IMR-90 (cell line): ENCODE measurements at regions of chr1 and their contacts with region 1.

Region 1: DNA sequence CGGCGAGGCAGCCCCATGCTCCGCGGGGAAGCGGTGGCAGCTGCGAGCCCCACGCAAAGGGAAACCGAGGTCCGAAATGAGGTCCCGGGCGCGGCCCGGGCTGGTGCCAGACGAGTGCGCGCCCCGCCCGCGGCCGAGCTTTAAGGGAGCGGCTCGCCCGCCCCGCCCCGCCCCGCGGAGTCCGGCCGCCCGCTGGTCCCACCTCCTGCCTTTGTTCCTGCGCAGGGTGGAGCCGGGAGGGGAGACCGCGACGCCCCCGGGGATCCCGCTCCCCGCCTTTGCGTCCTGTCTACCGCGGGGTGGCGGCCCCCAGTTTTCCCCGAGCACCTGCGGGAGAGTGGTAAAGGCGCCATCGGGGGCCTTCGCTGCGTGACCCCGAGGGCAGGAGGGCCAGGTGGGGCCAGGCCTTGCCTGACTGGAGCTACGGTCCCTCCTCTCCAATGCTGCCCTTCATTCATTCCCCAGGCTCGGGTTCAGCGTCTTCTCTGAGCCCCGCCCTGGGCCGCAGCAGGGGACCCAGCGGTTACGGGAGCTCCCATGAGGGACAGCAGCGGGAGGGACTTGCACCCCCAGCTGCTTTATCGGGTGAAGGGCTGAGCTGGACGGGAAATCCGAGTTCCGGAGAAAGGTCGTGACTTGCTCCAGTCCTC is at the start of gene HES2:
- DNase-seq: no peak
- ATAC-seq: no peak; the same call in 1 of the 2 replicates
- H3K4me3 ChIP-seq: no peak within 1 kb of the TSS
- H3K27ac ChIP-seq: no peak within 1 kb of the TSS
- H3K4me1 ChIP-seq: no peaks in the 10 kb centered on the region; the same call in 1 of the 2 replicates
- H3K27me3 ChIP-seq: peaks cover 88% of the 10 kb centered on the region
- CTCF ChIP-seq: no peak
- POLR2A ChIP-seq: no peak
- RAD21 ChIP-seq: no peak
- total RNA-seq, gene HES2: not detected in 2 replicates

Region 2: GRCh38 chr1:6393400-6394187 is 26.3 kb before region 1 on chr1 and contains the start of gene ACOT7:
- CTCF ChIA-PET with region 1: no interaction called
- POLR2A ChIA-PET with region 1: no interaction called
- dilution Hi-C with region 1: no loop called
- in situ Hi-C with region 1: no loop called
- intact Hi-C with region 1: no loop called
- DNase-seq: peak; percentile 78
- ATAC-seq: peak; percentile 97
- H3K4me3 ChIP-seq: peak within 1 kb of the TSS; percentile 91
- H3K27ac ChIP-seq: peak within 1 kb of the TSS; percentile 89
- H3K4me1 ChIP-seq: peaks cover 9% of the 10 kb centered on the region
- H3K27me3 ChIP-seq: peaks cover 2% of the 10 kb centered on the region; the same call in 1 of the 2 replicates
- CTCF ChIP-seq: 0 out of 2 replicates have a peak, but pooled peaks have one; percentile 25
- POLR2A ChIP-seq: peak; percentile 88
- RAD21 ChIP-seq: no peak
- total RNA-seq, gene ACOT7: 48.9 and 51.6 TPM in 2 replicates

Region 3: DNA sequence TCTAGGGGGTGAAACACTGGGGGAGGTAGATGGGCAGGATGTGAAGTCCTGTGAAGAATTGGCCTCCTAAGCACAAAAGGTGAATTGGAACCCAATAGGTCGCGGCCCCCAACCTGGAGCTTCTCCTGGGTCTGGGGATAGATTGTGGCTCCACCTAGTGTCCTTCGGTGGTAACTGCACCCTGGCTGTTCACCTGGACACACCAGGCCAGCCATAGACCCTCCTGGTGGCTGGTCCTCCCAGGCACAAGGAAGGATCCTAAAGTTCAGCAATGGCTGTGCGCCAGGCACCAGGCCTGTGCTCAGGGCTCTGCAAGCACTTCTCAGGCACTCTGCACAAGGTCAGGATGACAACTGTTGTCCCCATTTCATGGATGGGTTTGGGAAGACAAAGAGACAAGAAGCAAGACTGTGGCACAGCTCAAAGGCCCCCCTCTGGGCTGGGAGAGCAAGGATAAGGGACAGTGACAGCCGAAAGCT is 18.2 kb after region 1 on chr1:
- CTCF ChIA-PET with region 1: interaction called, 13 read pairs
- POLR2A ChIA-PET with region 1: no interaction called
- dilution Hi-C with region 1: no loop called
- in situ Hi-C with region 1: no loop called
- intact Hi-C with region 1: no loop called
- DNase-seq: peak; percentile 33
- ATAC-seq: peak; percentile 80
- H3K4me3 ChIP-seq: no peak overlapping the region
- H3K27ac ChIP-seq: no peak overlapping the region
- H3K4me1 ChIP-seq: peaks cover 1% of the 10 kb centered on the region; the same call in 1 of the 2 replicates
- H3K27me3 ChIP-seq: peaks cover 42% of the 10 kb centered on the region
- CTCF ChIP-seq: peak; percentile 71
- POLR2A ChIP-seq: no peak
- RAD21 ChIP-seq: peak; percentile 59